Sigmoid colon (tissue), 7 donors: ENCODE measurements at regions of chr9 and their contacts with region 1.

Region 1: GRCh38 chr9:34899535-34900158 is 58.4 kb upstream of the PHF24 start:
- DNase-seq: peak; percentile 84
- H3K4me3 ChIP-seq: no peak overlapping the region
- H3K27ac ChIP-seq: no peak overlapping the region
- H3K4me1 ChIP-seq: no peaks in the 10 kb centered on the region
- H3K27me3 ChIP-seq: peaks cover 0 to 14% (median 0%) of the 10 kb centered on the region in 3 donors
- CTCF ChIP-seq: peak; percentile 66 to 80 (median 78)
- EP300 ChIP-seq: no peak
- POLR2A ChIP-seq: no peak

Region 2: DNA sequence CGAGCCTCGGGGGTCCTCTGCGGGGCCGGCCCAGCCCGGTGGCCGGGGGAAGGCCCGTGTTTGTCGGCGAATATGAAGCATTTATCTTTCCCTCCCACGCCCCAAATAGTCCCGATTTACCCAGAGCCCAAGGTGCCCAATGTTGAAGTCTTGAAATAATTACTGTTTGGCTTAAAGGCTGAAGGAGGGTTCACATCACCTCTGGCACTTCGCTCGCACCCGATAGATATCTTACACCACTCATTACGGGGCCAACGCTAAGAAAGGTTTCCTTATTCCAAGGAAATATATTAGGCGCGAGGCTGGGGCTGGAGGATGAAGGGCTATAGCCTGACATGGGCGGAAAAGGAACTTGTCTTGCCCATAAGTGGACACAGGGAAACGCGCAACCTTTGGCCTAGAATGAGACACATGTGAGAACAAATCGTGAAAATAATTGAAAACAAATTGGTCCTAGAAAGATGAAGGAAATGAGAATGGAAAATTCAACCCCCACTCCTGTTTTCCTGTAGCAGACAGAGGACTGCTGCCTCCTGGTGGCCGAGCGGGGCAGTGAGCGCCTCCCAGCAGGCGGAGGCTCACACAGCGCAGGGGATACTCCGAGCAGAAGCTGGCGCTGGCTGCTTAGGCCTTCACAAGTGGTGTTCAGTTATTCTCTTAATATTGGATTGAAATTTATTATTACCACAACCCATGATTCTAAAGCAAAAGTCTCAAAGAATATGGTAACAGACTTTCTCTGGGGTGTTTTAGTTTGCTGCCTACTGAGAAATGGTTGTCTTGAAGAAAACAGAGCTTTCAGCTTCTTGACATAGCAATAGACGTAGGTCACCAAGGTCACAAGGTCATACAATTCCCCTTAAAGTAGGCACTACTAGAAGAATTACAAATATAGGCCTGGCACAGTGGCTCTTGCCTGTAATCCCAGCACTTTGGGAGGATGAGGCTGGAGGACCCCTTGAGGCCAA is 197.6 kb before region 1 on chr9:
- intact Hi-C with region 1: loop called (anchors 5 kb)
- DNase-seq: peak; percentile 93
- H3K4me3 ChIP-seq: peak overlapping the region; percentile 56 to 72 (median 62)
- H3K27ac ChIP-seq: peak overlapping the region; percentile 78 to 86 (median 80)
- H3K4me1 ChIP-seq: peaks cover 0 to 11% (median 5%) of the 10 kb centered on the region in 4 donors
- H3K27me3 ChIP-seq: no peaks in the 10 kb centered on the region
- CTCF ChIP-seq: peak; percentile 90 to 98 (median 95)
- EP300 ChIP-seq: no peak
- POLR2A ChIP-seq: no peak

Region 3: DNA sequence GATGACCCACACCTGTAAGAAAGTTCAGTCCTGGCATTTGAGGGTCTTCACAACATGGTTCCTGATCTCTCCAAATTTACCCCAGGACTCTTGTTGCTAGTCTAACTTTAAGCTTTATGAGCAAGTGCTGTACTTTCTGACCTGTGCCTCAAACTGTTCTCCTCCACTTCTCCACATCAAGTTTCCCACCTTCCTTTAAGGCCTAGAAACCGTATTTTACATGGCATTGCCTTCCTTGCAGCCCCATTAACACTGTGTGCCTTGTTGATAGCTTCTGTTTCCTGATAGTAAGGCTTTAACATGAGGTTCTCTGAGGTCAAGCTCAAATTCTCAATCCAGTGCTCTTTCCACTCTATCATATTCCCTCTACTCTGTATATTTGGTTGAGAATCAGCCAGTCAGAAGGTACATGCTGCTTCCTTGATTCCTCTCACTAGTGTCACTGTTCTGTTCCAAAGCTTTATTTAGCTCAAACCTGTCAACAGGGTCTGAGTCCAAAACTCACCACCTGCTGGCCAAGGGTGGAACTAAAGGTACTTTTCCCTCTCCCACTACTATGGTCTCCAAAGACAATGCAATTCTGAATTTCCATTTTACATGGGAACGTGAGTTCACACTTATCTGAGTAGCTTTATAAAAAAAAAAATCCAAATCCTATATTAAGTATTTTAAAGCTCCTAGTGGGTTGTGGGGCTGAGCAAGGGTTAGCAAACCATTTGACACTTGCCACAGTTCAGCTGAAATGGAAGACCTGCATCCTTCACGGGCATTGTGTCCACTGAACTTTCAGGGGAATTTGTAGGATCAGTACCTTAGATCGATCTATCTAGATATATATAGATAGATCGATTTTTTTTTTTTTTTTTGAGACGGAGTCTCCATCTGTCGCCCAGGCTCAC is 151.7 kb after region 1 on chr9:
- intact Hi-C with region 1: loop called (anchors 2 kb)
- DNase-seq: no peak
- H3K4me3 ChIP-seq: no peak overlapping the region
- H3K27ac ChIP-seq: peak overlapping the region; percentile 45 to 64 (median 58)
- H3K4me1 ChIP-seq: peaks cover 0 to 8% (median 2%) of the 10 kb centered on the region in 4 donors
- H3K27me3 ChIP-seq: no peaks in the 10 kb centered on the region
- CTCF ChIP-seq: peak; percentile 35 to 63 (median 55)
- EP300 ChIP-seq: no peak
- POLR2A ChIP-seq: no peak

Region 4: DNA sequence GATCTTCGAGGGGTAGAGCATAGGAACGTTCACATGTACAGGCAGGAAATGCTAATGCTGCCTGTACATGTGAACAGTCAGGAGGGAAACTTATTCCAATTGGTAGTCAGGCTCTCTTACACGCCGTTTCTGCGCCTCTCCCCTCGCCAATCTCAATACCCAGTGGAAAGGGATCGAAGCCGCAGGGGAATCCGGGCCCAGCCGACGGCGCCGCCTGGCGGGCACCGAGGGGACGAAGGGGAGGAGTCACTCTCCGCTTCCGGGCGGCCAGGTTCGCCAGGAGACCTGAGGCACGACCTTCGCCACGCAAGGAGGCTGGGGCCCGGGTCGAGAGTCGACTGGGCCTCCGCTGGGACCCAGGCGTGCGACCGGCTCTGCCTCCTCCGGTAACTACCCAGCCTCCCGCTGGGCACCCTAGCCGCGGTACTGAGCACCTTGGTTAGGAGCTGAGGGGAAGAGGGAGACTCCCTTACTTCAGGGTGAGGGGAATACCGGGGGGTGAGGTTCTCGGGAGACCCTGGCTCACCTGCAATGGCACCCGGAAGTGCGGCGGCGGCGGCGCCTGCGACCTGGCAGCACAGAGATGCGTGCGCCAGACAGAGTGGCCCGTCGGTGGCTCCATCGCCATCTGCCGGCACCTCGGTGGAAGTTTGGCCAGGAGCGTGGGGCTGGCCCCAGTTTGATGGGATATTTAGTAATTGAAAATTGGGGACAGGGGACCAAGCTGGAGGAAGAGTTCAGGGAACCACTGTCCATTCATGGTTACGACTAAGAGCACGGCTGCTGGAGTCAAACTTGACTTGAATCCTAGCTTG is 196.6 kb after region 1 on chr9 and contains the start of gene PIGO:
- intact Hi-C with region 1: loop called (anchors 2 kb)
- DNase-seq: peak; percentile 94
- H3K4me3 ChIP-seq: peak within 1 kb of the TSS; percentile 77 to 95 (median 80)
- H3K27ac ChIP-seq: peak within 1 kb of the TSS; percentile 91 to 96 (median 92)
- H3K4me1 ChIP-seq: peaks cover 0 to 16% (median 13%) of the 10 kb centered on the region in 4 donors
- H3K27me3 ChIP-seq: no peaks in the 10 kb centered on the region
- CTCF ChIP-seq: peak; percentile 62 to 88 (median 66)
- EP300 ChIP-seq: no peak
- POLR2A ChIP-seq: peak in 1 of 2 donors; percentile 34
- total RNA-seq, gene PIGO: 5.9 to 13.6 (median 9.1) TPM

Region 5: GRCh38 chr9:35470894-35471293 is 571.2 kb after region 1 on chr9:
- intact Hi-C with region 1: loop called (anchors 10 kb)
- DNase-seq: no peak
- H3K4me3 ChIP-seq: no peak overlapping the region
- H3K27ac ChIP-seq: no peak overlapping the region
- H3K4me1 ChIP-seq: no peaks in the 10 kb centered on the region
- H3K27me3 ChIP-seq: no peaks in the 10 kb centered on the region
- CTCF ChIP-seq: no peak
- EP300 ChIP-seq: no peak
- POLR2A ChIP-seq: no peak